B cell (primary cell): ENCODE measurements at regions of chr5 and their contacts with region 1.

Region 1: DNA sequence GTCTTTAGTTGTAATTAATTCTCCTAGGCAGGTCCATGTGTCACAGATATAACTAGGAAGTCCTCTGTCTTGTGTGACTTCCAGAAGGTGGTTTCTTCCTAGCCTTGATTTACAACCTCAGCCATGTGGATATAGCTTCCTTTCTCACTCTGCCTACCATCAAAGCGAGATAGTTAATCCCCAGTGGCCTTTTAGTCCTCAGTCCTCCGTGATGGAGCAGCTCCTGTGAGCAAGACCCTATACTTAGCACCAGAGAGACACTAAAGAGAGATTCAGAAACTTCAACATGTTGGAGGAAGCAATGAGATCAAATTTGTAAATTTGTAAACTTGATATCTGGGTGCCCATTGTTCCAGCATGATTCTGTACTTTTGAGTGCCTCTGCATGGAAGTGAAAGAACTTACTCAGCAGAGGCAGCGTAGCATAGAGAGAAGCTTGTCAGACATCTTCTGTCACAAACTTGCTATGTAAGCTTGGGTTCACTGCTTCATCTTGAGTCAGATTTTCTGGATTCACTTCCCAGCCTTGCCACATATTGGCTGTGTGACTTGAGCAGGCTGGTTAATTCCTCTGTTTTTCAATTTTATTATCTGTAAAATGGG is 170.2 kb upstream of the NR3C1 start:
- DNase-seq: peak; percentile 30
- ATAC-seq: peak; percentile 58
- H3K4me3 ChIP-seq: no peak overlapping the region
- H3K4me3 Mint-ChIP-seq: no peak overlapping the region
- H3K27ac ChIP-seq: no peak overlapping the region
- H3K27ac Mint-ChIP-seq: no peak overlapping the region
- H3K4me1 ChIP-seq: peaks cover 0 to 5% of the 10 kb centered on the region in 2 donors
- H3K4me1 Mint-ChIP-seq: peaks cover 12% of the 10 kb centered on the region
- H3K27me3 ChIP-seq: no peaks in the 10 kb centered on the region
- H3K27me3 Mint-ChIP-seq: no peaks in the 10 kb centered on the region
- CTCF ChIP-seq: no peak

Region 2: DNA sequence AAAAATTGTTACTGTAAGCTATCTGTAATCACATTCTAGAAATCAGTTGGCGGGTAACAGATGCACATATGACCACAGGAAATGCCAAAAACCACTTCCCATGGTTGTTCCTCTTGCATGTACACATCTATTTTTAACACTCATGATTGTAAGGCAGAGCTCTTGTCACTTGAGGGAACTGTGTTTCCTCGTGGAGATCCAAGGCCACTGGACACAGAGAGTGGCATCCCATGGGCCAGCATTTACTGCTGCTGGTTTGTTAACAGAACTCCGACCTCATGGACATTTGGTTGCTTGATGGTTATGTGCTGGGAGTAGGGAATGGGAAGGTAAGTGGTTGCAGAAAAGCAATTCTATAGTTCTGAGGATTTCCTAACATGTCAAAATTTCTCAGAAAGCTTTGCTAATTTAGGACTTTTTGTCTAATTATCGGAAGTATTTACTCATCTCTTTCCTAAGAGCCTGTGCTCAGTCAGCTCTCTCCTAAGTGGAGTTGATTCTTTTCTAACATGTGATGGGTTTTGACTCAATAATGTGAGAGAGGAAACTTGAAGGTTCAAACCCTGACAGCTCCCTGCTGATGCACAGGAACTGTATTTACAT is 31.8 kb after region 1 on chr5:
- CTCF ChIA-PET with region 1: no interaction called
- POLR2A ChIA-PET with region 1: no interaction called
- intact Hi-C with region 1: loop called (anchors 5 kb)
- DNase-seq: peak; percentile 34
- ATAC-seq: no peak
- H3K4me3 ChIP-seq: no peak overlapping the region
- H3K4me3 Mint-ChIP-seq: peak overlapping the region; percentile 44
- H3K27ac ChIP-seq: no peak overlapping the region
- H3K27ac Mint-ChIP-seq: no peak overlapping the region
- H3K4me1 ChIP-seq: peaks cover 16 to 19% of the 10 kb centered on the region in 2 donors
- H3K4me1 Mint-ChIP-seq: peaks cover 22% of the 10 kb centered on the region
- H3K27me3 ChIP-seq: no peaks in the 10 kb centered on the region
- H3K27me3 Mint-ChIP-seq: no peaks in the 10 kb centered on the region
- CTCF ChIP-seq: no peak